PC-9 (cell line): ENCODE measurements at regions of chr16 and their contacts with region 1.

Region 1: GRCh38 chr16:68229431-68230198 is 6.3 kb downstream of the ESRP2 start:
- DNase-seq: peak in 1 of 2 experiments; percentile 49
- H3K4me3 ChIP-seq: no peak overlapping the region
- H3K27ac ChIP-seq: no peak overlapping the region
- H3K4me1 ChIP-seq: peaks cover 12% of the 10 kb centered on the region
- H3K27me3 ChIP-seq: no peaks in the 10 kb centered on the region
- CTCF ChIP-seq: peak; percentile 92

Region 2: GRCh38 chr16:67499106-67499505 is 730.5 kb before region 1 on chr16:
- CTCF ChIA-PET with region 1: no interaction called
- POLR2A ChIA-PET with region 1: no interaction called
- intact Hi-C with region 1: loop called (anchors 10 kb)
- DNase-seq: no peak
- H3K4me3 ChIP-seq: no peak overlapping the region
- H3K27ac ChIP-seq: no peak overlapping the region
- H3K4me1 ChIP-seq: no peaks in the 10 kb centered on the region
- H3K27me3 ChIP-seq: no peaks in the 10 kb centered on the region
- CTCF ChIP-seq: no peak

Region 3: GRCh38 chr16:67935402-67936123 is 294.1 kb before region 1 on chr16:
- CTCF ChIA-PET with region 1: no interaction called
- POLR2A ChIA-PET with region 1: no interaction called
- intact Hi-C with region 1: loop called (anchors 5 kb)
- DNase-seq: peak; percentile 93 to 94
- H3K4me3 ChIP-seq: peak overlapping the region; percentile 88
- H3K27ac ChIP-seq: peak overlapping the region; percentile 65
- H3K4me1 ChIP-seq: peaks cover 6% of the 10 kb centered on the region; the same call in 1 of the 2 replicates
- H3K27me3 ChIP-seq: no peaks in the 10 kb centered on the region
- CTCF ChIP-seq: no peak

Region 4: GRCh38 chr16:67993189-67994039 is 236.2 kb before region 1 on chr16:
- CTCF ChIA-PET with region 1: no interaction called
- POLR2A ChIA-PET with region 1: no interaction called
- intact Hi-C with region 1: loop called (anchors 1 kb)
- DNase-seq: peak in 1 of 2 experiments; percentile 75
- H3K4me3 ChIP-seq: no peak overlapping the region
- H3K27ac ChIP-seq: no peak overlapping the region
- H3K4me1 ChIP-seq: no peaks in the 10 kb centered on the region
- H3K27me3 ChIP-seq: no peaks in the 10 kb centered on the region
- CTCF ChIP-seq: peak; percentile 94

Region 5: DNA sequence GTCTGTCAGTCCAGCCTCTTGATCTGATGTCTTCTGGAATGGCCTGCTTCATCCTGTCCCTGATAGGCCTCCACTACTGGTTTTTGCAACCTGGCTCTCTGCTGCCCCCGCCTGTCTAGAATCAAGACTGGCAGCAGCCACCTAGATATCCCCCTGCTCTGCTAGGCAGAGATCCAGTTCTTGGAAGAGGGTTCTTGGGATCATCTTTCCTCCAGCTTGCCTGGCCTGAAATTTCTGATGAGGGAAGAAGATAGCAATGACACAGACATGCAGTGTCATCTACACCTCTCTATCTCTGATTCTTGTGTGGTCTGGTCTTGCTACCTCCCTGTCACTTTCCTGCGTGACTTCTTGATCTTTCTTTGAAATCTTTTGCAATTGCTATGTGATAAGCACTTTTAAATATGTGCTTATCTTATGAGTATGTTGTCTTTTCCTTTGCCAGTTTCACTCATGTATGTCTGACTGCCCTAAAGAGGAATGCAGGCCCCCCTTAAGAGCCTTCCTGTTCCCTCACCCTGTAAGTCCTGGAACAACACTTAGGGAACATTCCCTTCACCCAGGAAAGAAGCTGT is 164.7 kb before region 1 on chr16:
- CTCF ChIA-PET with region 1: no interaction called
- POLR2A ChIA-PET with region 1: no interaction called
- intact Hi-C with region 1: loop called (anchors 1 kb)
- DNase-seq: peak in 1 of 2 experiments; percentile 60
- H3K4me3 ChIP-seq: no peak overlapping the region
- H3K27ac ChIP-seq: no peak overlapping the region
- H3K4me1 ChIP-seq: no peaks in the 10 kb centered on the region
- H3K27me3 ChIP-seq: no peaks in the 10 kb centered on the region
- CTCF ChIP-seq: peak; percentile 84

Region 6: GRCh38 chr16:68085259-68086071 is 144.2 kb before region 1 on chr16 and contains the start of gene NFATC3:
- CTCF ChIA-PET with region 1: no interaction called
- POLR2A ChIA-PET with region 1: interaction called, 6 read pairs
- intact Hi-C with region 1: loop called (anchors 2 kb)
- DNase-seq: peak; percentile 89 to 96
- H3K4me3 ChIP-seq: peak within 1 kb of the TSS; percentile 91
- H3K27ac ChIP-seq: peak within 1 kb of the TSS; percentile 51
- H3K4me1 ChIP-seq: peaks cover 14% of the 10 kb centered on the region
- H3K27me3 ChIP-seq: no peaks in the 10 kb centered on the region
- CTCF ChIP-seq: no peak
- total RNA-seq, gene NFATC3: 37.2 and 43.7 TPM in 2 replicates

Region 7: DNA sequence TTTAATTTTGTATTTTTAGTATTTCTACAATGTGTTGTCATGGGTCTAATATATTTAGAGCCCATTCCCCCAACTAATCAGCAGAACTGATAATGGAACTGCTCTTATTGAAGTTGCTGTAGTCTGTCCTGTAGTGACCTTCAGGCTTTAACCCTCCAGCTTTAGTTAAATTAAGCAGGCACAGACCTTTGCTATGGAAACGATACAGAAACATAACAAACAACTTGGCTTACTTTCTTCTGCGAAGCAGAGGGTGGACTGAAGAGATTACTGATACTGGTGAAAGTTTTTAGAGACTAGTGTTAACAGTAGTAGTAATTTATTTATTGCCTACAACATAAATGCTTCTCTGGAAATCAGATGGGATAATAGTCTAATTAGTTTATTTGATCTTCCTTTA is 83.0 kb before region 1 on chr16:
- CTCF ChIA-PET with region 1: interaction called, 10 read pairs
- POLR2A ChIA-PET with region 1: no interaction called
- intact Hi-C with region 1: no loop called
- DNase-seq: no peak
- H3K4me3 ChIP-seq: no peak overlapping the region
- H3K27ac ChIP-seq: 0 out of 2 replicates have a peak overlapping the region, but pooled peaks have one; percentile 37
- H3K4me1 ChIP-seq: peaks cover 31% of the 10 kb centered on the region
- H3K27me3 ChIP-seq: no peaks in the 10 kb centered on the region
- CTCF ChIP-seq: no peak

Region 8: DNA sequence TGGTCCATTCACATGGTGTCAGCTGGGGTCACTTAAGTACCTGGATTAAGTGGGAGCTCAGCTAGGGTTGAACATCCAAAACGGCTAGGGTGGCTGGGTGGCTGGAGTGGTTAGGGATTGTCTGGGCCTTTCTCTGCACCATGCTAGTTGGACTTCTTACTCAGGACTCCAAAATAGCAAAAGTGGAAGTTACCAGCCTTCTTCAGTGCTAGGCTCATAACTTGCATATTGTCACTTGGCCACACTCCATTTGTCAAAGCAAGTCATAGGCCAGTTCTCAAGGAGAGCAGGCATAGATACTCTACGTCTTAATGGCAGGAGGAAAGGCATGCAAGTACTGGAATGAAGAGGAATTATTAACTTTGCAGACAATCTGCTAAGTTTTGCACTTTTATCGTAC is 63.4 kb before region 1 on chr16:
- CTCF ChIA-PET with region 1: no interaction called
- POLR2A ChIA-PET with region 1: no interaction called
- intact Hi-C with region 1: no loop called
- DNase-seq: no peak
- H3K4me3 ChIP-seq: no peak overlapping the region
- H3K27ac ChIP-seq: no peak overlapping the region
- H3K4me1 ChIP-seq: no peaks in the 10 kb centered on the region
- H3K27me3 ChIP-seq: no peaks in the 10 kb centered on the region
- CTCF ChIP-seq: no peak